ENCODE measurements at regions of chr2 and their contacts with region 1.

Region 1: DNA sequence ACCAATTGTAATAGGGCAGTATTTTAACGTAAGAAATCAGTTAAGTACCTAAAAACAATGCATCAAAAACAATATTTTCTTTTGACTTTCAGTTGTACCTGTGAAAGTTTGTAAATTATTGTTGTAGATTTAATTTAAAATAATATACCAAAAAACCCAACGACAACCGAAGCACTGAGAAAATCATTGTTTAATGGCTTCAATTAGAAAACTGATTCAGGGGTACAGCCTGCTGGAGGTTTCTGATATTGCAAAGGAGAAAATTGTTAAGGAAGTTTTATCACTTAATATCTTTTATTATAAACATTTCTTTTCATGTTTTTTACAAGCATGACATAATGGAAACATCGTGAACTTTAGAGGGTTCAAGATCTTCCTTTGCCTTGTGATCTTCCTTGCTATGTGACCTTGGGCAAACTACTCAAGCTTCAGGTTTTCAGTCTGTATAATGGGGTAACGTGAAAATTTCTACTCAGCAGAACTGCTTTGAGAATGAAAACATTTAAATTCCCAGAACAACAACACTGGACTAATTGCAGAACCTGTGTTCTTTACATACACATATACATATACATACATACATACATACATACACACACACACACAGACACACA is 76.3 kb upstream of the GLS start:
- DNase-seq: no peak
- H3K4me3 ChIP-seq: no peak overlapping the region
- H3K27ac ChIP-seq: no peak overlapping the region
- H3K4me1 ChIP-seq: no peaks in the 10 kb centered on the region
- H3K27me3 ChIP-seq: no peaks in the 10 kb centered on the region
- CTCF ChIP-seq: peak; percentile 58 to 74

Region 2: DNA sequence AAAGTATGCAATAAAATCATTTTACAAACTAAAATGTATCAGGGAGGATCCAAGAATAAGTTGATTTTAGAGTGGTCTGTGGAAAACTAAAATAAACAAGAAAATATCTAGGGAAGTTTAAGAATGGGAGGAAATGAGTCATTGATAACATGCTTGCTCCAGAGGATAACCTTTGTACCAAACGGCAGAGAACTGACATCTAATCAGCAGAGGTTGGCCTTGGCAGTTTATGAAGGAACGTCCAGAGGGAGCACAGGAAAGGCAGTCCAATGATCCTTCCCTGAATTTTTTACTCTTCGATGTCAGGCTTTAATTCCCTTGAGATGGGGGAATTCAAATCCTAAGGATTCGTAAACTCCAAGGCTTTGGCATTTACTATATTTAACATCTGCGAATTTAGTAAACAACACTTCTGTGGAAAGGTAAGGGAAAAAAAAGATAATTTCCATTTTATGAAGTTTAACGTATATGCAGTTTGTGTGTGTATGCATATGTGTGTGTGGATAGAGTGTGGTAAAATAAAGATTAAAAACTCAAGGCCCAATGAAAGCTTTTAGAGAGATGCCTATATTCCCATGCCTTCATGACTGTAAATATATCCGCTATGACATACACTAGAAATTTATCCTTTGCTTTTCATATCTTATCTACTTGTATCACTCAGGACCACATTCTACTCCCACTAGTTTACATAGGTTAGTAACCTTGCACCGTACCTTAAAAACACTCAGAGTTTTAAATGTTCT is 469.6 kb before region 1 on chr2:
- CTCF ChIA-PET with region 1: no interaction called
- dilution Hi-C with region 1: no loop called
- in situ Hi-C with region 1: no loop called
- intact Hi-C with region 1: loop called (anchors 10 kb)
- DNase-seq: no peak
- H3K4me3 ChIP-seq: no peak overlapping the region
- H3K27ac ChIP-seq: no peak overlapping the region
- H3K4me1 ChIP-seq: peaks cover 5% of the 10 kb centered on the region
- H3K27me3 ChIP-seq: no peaks in the 10 kb centered on the region
- CTCF ChIP-seq: no peak

Region 3: GRCh38 chr2:190511104-190511503 is 293.2 kb before region 1 on chr2:
- CTCF ChIA-PET with region 1: no interaction called
- dilution Hi-C with region 1: no loop called
- in situ Hi-C with region 1: no loop called
- intact Hi-C with region 1: loop called (anchors 5 kb)
- DNase-seq: no peak
- H3K4me3 ChIP-seq: no peak overlapping the region
- H3K27ac ChIP-seq: no peak overlapping the region
- H3K4me1 ChIP-seq: peaks cover 6% of the 10 kb centered on the region
- H3K27me3 ChIP-seq: no peaks in the 10 kb centered on the region
- CTCF ChIP-seq: peak; percentile 30 to 52

Region 4: GRCh38 chr2:190636373-190636772 is 167.9 kb before region 1 on chr2:
- CTCF ChIA-PET with region 1: no interaction called
- dilution Hi-C with region 1: no loop called
- in situ Hi-C with region 1: no loop called
- intact Hi-C with region 1: loop called (anchors 5 kb)
- DNase-seq: peak; percentile 58
- H3K4me3 ChIP-seq: no peak overlapping the region
- H3K27ac ChIP-seq: no peak overlapping the region
- H3K4me1 ChIP-seq: peaks cover 27% of the 10 kb centered on the region
- H3K27me3 ChIP-seq: no peaks in the 10 kb centered on the region
- CTCF ChIP-seq: no peak

Region 5: GRCh38 chr2:190781604-190782198 is 22.6 kb before region 1 on chr2:
- CTCF ChIA-PET with region 1: no interaction called
- dilution Hi-C with region 1: no loop called
- in situ Hi-C with region 1: no loop called
- intact Hi-C with region 1: loop called (anchors 1 kb)
- DNase-seq: peak; percentile 43
- H3K4me3 ChIP-seq: no peak overlapping the region
- H3K27ac ChIP-seq: no peak overlapping the region
- H3K4me1 ChIP-seq: peaks cover 5% of the 10 kb centered on the region
- H3K27me3 ChIP-seq: no peaks in the 10 kb centered on the region
- CTCF ChIP-seq: peak; percentile 19 to 63

Region 6: DNA sequence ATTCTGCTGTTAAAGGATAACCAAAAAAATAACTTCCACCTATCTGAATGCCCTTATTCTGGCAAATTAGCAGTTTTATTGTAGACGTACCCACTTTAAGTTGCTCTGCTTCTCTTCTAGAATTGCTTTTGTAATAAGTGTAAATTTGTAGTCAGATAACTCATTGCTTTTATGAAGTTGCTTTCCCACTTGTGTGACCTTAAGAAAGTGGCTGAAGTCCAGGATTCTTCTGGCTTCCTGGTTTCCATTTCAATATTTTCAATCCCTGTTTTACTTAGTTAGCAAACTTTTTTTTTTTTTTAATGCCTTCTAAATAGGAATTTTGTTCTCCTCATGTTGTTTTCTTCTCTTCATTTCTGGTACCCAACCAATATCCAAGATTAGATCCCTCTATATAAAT is 136.2 kb after region 1 on chr2:
- CTCF ChIA-PET with region 1: no interaction called
- dilution Hi-C with region 1: no loop called
- in situ Hi-C with region 1: no loop called
- intact Hi-C with region 1: no loop called
- DNase-seq: no peak
- H3K4me3 ChIP-seq: no peak overlapping the region
- H3K27ac ChIP-seq: no peak overlapping the region
- H3K4me1 ChIP-seq: no peaks in the 10 kb centered on the region
- H3K27me3 ChIP-seq: no peaks in the 10 kb centered on the region
- CTCF ChIP-seq: no peak